Activated T-helper 2 cell treated with anti-CD3 and anti-CD28 coated beads, Interferon-gamma antibody, Interleukin-2, Interleukin-4, amounts not matched to agents 10 μg/mL and 5 μg/mL and 100 μg/mL, durations not matched to agents 14 hours and 24 hours and 36 hours (primary cell): ENCODE measurements at regions of chr10 and their contacts with region 1.

Region 1: GRCh38 chr10:110774069-110775019 is 97.4 kb upstream of the PDCD4 start:
- DNase-seq: peak; percentile 59
- H3K4me3 Mint-ChIP-seq: peak overlapping the region; percentile 54
- H3K27ac Mint-ChIP-seq: peak overlapping the region; percentile 99
- H3K4me1 Mint-ChIP-seq: peaks cover 59% of the 10 kb centered on the region
- H3K27me3 Mint-ChIP-seq: peaks cover 1% of the 10 kb centered on the region

Region 2: DNA sequence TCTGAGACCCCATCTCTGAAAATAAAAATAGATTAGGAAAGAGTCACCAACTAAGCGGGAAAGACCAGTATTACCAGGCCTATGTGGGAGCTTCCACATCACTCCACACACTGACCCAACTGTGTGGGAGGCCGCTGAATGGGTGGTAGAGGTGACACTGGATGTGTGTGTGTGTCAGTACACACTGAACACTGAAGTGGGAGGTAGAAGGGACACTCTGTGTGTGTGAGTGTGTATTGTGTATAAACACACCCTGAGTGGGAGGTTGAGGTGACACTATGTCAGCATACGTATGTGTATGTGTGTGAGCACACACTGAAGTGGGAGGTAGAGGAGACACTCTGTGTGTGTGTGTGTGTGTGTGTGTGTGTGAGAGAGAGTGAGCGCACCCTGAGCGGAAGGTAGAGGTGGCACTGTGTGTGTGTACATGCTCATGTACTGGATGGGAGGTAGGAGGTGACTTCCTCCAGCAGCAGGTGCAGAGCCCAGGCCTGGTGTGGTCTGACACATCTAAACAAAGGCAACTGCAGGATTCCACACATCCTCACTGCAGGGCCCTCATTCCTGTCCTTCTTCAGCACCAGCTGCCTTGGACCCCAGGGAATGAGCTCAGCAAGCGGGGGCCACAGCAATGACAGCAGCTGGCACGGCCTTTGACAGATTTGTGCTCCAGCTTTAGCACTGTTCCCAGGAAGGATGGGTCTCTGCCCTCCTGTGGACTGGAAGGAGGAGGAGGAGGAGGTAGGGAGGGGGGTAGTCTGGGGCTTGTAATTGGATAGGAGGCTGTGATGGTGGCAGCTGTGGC is 156.7 kb before region 1 on chr10:
- intact Hi-C with region 1: loop called (anchors 5 kb)
- DNase-seq: no peak
- H3K4me3 Mint-ChIP-seq: no peak overlapping the region
- H3K27ac Mint-ChIP-seq: peak overlapping the region; percentile 77
- H3K4me1 Mint-ChIP-seq: peaks cover 42% of the 10 kb centered on the region
- H3K27me3 Mint-ChIP-seq: no peaks in the 10 kb centered on the region

Region 3: DNA sequence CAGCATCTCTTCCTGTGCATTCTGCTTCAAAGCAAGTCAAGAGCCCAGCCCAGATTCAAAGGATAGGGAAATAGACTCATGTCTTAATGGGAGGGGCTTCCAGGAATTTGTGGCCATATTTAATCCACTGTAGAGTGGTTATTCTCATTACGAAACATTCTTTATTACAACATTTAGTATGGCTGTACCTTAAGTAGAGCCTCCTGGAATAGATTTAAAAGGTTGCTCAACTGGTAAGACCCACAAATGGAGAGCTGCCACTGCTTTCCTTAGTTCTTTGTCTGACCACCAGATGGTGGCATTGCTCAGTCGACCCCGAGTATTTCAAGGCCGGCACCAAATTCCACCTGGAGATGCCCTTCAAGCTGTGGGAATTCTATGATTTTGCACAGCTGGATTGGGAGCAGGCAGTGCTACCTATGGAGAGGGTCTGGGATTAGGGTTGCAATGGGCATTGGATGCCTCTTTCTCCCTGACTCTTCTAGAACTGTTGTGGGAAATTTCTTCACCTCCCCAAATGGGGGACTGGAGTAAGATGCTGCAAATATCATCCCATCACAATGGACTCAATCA is 28.0 kb before region 1 on chr10:
- intact Hi-C with region 1: loop called (anchors 1 kb)
- DNase-seq: peak; percentile 27
- H3K4me3 Mint-ChIP-seq: no peak overlapping the region
- H3K27ac Mint-ChIP-seq: no peak overlapping the region
- H3K4me1 Mint-ChIP-seq: peaks cover 43% of the 10 kb centered on the region
- H3K27me3 Mint-ChIP-seq: no peaks in the 10 kb centered on the region

Region 4: GRCh38 chr10:110798340-110798739 is 24.0 kb after region 1 on chr10:
- intact Hi-C with region 1: loop called (anchors 1 kb)
- DNase-seq: no peak
- H3K4me3 Mint-ChIP-seq: no peak overlapping the region
- H3K27ac Mint-ChIP-seq: peak overlapping the region; percentile 70
- H3K4me1 Mint-ChIP-seq: peaks cover 21% of the 10 kb centered on the region
- H3K27me3 Mint-ChIP-seq: peaks cover 2% of the 10 kb centered on the region

Region 5: DNA sequence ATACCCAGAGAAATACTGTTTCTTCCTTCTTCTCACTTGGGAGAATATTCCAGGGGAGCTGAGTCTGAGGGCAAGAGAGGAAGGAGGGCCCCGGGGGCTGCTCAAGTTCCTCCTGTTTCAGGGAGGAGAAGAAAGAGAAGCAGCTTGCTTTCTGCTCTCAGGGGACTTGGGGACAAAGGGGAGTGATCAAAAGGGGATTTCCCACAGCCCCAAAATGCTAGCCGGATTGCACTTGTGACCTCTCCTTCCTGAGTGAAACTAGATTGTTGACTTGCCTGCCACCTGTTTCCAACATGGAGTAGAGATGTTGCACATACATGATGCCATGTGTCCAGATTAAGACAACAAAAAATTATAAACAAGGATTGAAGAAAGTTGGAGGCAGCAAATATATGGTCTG is 68.7 kb after region 1 on chr10:
- intact Hi-C with region 1: loop called (anchors 1 kb)
- DNase-seq: peak; percentile 56
- H3K4me3 Mint-ChIP-seq: no peak overlapping the region
- H3K27ac Mint-ChIP-seq: peak overlapping the region; percentile 71
- H3K4me1 Mint-ChIP-seq: peaks cover 30% of the 10 kb centered on the region
- H3K27me3 Mint-ChIP-seq: no peaks in the 10 kb centered on the region

Region 6: GRCh38 chr10:110864662-110865140 is 90.4 kb after region 1 on chr10:
- intact Hi-C with region 1: loop called (anchors 2 kb)
- DNase-seq: peak; percentile 65
- H3K4me3 Mint-ChIP-seq: peak overlapping the region; percentile 72
- H3K27ac Mint-ChIP-seq: peak overlapping the region; percentile 93
- H3K4me1 Mint-ChIP-seq: peaks cover 73% of the 10 kb centered on the region
- H3K27me3 Mint-ChIP-seq: no peaks in the 10 kb centered on the region

Region 7: DNA sequence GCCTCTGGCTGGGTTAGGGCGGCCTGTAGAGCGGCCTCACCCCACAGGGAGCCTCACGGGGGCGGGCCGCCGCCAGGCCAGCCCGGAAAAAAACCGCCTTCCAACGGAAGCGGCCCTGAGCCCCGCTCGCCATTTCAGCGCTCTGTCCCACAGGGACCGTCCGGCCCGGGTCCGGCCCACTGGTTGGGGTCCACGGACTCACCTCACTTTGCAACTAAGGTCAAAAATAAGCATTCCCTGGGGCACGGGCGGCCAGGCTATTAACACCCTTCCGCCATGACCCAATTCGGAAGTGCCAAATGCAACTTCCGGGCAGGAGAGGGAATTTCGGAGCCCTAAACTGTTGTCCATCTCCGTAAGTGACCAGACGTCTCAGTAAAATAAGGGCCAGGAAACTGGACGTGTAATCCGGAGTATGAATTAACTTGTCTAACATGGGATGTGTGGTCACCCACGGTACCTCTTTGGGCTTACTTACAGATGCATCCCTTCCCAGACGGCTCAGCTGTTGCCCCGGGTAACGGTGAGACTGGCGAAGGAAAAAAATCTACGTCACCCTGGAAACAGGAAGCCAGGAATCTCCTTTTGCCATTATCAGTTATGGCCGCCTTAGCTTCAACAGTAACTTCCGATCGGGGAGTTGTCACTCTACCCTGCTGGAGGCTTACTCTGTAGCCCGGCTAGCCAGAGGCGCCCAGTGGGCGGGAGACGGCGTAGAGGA is 144.5 kb after region 1 on chr10 and contains the start of gene BBIP1:
- intact Hi-C with region 1: loop called (anchors 1 kb)
- DNase-seq: no peak
- H3K4me3 Mint-ChIP-seq: peak within 1 kb of the TSS; percentile 94
- H3K27ac Mint-ChIP-seq: peak within 1 kb of the TSS; percentile 93
- H3K4me1 Mint-ChIP-seq: peaks cover 39% of the 10 kb centered on the region
- H3K27me3 Mint-ChIP-seq: no peaks in the 10 kb centered on the region
- total RNA-seq, gene BBIP1: 31.5 and 32.7 TPM in 2 replicates